Dorsolateral prefrontal cortex (tissue), 120 donors: ENCODE measurements at regions of chr22 and their contacts with region 1.

Region 1: GRCh38 chr22:25057013-25057881 is 104.7 kb downstream of the KIAA1671 start:
- DNase-seq: peak in 9 of 10 donors; percentile 51 to 79 (median 72)
- H3K4me3 ChIP-seq: no peak overlapping the region
- H3K27ac ChIP-seq: peak overlapping the region in 1 of 59 donors; percentile 31
- H3K27me3 ChIP-seq: no peaks in the 10 kb centered on the region
- CTCF ChIP-seq: peak; percentile 25 to 88 (median 74)

Region 2: GRCh38 chr22:23414727-23415431 is 1642.4 kb before region 1 on chr22:
- intact Hi-C with region 1: no loop called
- DNase-seq: peak in 1 of 10 donors; percentile 33
- H3K4me3 ChIP-seq: no peak overlapping the region
- H3K27ac ChIP-seq: no peak overlapping the region
- H3K27me3 ChIP-seq: no peaks in the 10 kb centered on the region
- CTCF ChIP-seq: no peak

Region 3: GRCh38 chr22:24768537-24769374 is 288.5 kb before region 1 on chr22:
- intact Hi-C with region 1: loop called in 1 of 2 experiments (anchors 10 kb)
- DNase-seq: peak in 9 of 10 donors; percentile 29 to 83 (median 64)
- H3K4me3 ChIP-seq: no peak overlapping the region
- H3K27ac ChIP-seq: peak overlapping the region in 1 of 59 donors; percentile 54
- H3K27me3 ChIP-seq: peaks cover 0 to 6% (median 0%) of the 10 kb centered on the region in 45 donors
- CTCF ChIP-seq: peak in 55 of 56 donors; percentile 44 to 92 (median 71)

Region 4: DNA sequence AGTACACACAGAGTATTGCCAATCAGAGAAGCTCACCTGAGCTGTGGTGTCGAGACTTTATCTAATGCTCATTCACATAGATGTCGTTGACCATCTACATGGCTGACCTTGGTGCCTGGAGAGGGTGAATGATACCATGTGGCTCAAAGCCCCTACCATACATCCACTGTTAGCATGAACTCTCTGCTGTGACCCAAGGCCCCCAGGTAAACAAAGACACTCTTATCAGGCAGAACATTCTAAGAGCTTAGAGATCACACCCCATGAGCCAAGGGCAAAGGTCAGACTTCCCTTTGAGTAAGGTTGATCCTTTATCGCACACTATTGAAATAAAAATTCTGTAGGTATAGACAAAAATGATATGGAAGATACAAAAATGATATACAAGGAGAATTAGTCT is 267.7 kb before region 1 on chr22:
- intact Hi-C with region 1: no loop called
- DNase-seq: no peak
- H3K4me3 ChIP-seq: no peak overlapping the region
- H3K27ac ChIP-seq: no peak overlapping the region
- H3K27me3 ChIP-seq: no peaks in the 10 kb centered on the region
- CTCF ChIP-seq: no peak

Region 5: DNA sequence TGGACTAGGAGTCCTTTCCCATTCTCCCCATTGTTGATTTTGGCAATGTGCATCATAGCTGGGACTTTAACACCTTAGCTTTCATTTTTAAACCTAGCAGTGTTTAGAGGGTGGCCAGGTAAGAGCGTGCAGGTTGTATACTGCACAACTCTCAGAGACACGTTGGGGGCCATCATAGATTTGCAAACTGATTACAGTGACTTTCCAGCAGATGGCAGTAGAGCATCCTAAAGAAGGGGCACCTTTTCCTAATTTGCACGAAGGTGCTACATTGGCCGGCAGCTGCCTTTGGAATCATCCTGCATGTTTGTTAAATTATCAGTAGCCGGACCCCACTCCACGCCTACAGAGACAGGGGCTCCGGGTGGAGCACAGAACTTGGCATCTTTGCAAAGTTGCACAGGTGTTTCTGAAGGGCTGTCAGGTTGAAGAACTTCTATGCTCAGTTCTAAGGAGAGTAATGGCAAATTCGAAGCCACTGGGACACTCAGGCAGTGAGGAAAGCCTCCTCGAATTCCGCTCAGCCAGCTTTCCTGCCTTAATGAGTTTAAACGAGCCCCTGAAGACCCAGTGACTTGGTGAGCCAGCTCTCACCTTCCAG is 118.4 kb before region 1 on chr22:
- intact Hi-C with region 1: loop called in 1 of 2 experiments (anchors 5 kb)
- DNase-seq: peak in 1 of 10 donors; percentile 28
- H3K4me3 ChIP-seq: no peak overlapping the region
- H3K27ac ChIP-seq: no peak overlapping the region
- H3K27me3 ChIP-seq: no peaks in the 10 kb centered on the region
- CTCF ChIP-seq: peak; percentile 52 to 83 (median 72)

Region 6: DNA sequence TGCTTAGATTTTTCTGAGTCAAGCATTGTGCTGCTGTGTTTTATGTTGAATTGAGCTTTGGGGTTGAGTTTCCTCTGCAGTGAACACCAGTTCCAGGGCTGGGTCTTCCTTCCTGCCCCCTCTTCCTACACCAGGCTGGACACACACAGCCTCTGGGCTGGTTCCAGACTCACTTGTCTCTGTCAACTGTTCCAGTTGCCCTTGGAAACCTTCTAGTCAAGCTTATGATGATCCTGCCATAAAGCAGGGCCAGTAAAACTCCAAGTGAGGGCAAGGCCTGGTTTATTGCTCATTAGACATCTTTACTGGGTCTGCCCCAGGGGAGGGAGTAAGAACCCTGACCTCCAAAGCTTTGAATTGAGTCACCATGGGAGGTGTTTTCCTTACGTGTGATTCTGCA is 43.6 kb before region 1 on chr22:
- intact Hi-C with region 1: no loop called
- DNase-seq: no peak
- H3K4me3 ChIP-seq: no peak overlapping the region
- H3K27ac ChIP-seq: peak overlapping the region in 2 of 59 donors; percentile 30 to 53
- H3K27me3 ChIP-seq: no peaks in the 10 kb centered on the region
- CTCF ChIP-seq: no peak

Region 7: GRCh38 chr22:25159028-25159427 is 101.8 kb after region 1 on chr22:
- intact Hi-C with region 1: no loop called
- DNase-seq: peak in 5 of 10 donors; percentile 44 to 58 (median 53)
- H3K4me3 ChIP-seq: no peak overlapping the region
- H3K27ac ChIP-seq: no peak overlapping the region
- H3K27me3 ChIP-seq: no peaks in the 10 kb centered on the region
- CTCF ChIP-seq: no peak